Endothelial cell of umbilical vein (primary cell): ENCODE measurements at regions of chr14 and their contacts with region 1.

Region 1: DNA sequence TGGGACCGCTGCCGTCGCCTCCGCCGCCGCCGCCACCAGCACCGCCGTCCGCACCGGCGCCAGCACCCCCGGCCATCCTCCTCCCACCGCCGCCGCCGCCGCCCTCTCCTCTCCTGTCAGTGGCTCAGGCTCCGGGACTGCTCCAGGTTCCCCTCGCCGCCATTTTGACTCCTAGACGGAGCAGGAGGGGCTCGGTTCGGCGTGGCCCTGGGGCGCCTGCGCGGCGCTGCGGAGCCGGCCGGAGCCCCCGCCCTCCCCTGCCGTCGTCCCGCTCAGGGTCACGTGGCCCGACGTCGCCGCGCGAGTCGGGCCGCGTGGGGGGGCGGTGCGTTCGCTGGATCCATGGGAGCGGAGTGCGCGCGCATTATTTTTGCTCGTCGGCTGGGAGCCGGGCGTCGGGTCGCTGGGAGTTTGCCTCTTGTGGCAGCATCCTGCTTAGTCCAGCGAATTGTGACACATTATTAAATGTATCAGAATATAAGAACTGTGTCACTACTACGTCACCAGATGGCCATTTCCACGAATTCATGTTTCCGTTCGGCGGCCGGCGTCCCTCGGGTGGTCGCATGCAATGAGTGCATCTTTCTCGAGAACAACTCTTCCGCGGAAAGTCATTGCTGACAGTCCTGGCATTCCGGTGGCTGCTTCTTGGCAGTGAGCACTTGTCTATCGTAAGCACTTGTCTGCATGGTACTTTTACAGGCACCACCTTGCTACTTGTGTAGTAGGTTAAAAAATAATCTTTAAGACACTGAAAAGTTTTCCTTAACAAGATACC is at the start of gene BTBD7:
- DNase-seq: peak; percentile 97
- H3K4me3 ChIP-seq: peak within 1 kb of the TSS; percentile 82 to 95 (median 94)
- H3K27ac ChIP-seq: peak within 1 kb of the TSS; percentile 82
- H3K4me1 ChIP-seq: peaks cover 26% of the 10 kb centered on the region
- H3K27me3 ChIP-seq: no peaks in the 10 kb centered on the region
- CTCF ChIP-seq: peak in 1 of 2 donors; percentile 19
- POLR2A ChIP-seq: peak; percentile 63
- total RNA-seq, gene BTBD7: 47.8 and 50.2 TPM in 2 replicates

Region 2: GRCh38 chr14:93184388-93185353 is 148.4 kb before region 1 on chr14 and contains the starts of genes LYSET and MOAP1:
- CTCF ChIA-PET with region 1: no interaction called
- POLR2A ChIA-PET with region 1: no interaction called
- dilution Hi-C with region 1: no loop called
- intact Hi-C with region 1: loop called (anchors 1 kb)
- DNase-seq: peak; percentile 88
- H3K4me3 ChIP-seq: peak within 1 kb of the TSS; percentile 58 to 98 (median 96)
- H3K27ac ChIP-seq: peak within 1 kb of the TSS; percentile 98
- H3K4me1 ChIP-seq: peaks cover 21% of the 10 kb centered on the region
- H3K27me3 ChIP-seq: no peaks in the 10 kb centered on the region
- CTCF ChIP-seq: peak in 1 of 2 donors; percentile 27
- POLR2A ChIP-seq: peak; percentile 91
- total RNA-seq, gene LYSET: 18.4 and 18.8 TPM in 2 replicates
- total RNA-seq, gene MOAP1: 15.0 and 16.6 TPM in 2 replicates

Region 3: DNA sequence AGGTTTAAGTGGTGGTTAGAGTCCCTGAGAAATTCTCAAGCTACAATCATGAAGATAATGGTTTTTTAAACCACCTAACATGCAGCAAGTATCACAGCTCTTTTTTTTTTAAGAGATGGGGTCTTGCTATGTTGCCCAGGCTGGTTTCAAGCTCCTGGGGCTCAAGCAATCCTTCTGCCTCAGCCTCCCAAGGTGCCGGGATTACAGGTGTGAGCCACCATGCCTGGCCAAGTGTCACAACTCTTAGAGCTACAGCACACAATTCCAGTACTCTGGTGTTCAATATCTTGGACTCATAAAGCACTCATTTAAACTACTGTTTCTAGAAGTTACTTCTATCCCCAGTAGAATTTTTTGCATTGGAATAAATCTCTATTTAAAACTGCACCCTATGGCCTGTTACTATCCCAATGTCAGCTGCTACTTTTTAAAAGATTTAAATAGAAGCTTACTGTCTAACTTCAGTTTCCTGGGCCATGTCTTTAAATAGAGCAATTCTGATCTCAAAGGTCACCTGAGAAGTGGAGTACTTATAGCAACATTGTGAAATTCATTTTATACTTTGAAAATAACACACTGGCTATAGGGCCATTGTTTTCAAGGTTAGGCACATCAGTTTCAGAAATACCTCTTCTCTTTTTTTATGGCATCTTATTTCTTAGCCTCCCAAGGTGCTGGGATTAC is 137.6 kb before region 1 on chr14:
- CTCF ChIA-PET with region 1: no interaction called
- POLR2A ChIA-PET with region 1: no interaction called
- dilution Hi-C with region 1: no loop called
- intact Hi-C with region 1: no loop called
- DNase-seq: no peak
- H3K4me3 ChIP-seq: no peak overlapping the region
- H3K27ac ChIP-seq: no peak overlapping the region
- H3K4me1 ChIP-seq: no peaks in the 10 kb centered on the region
- H3K27me3 ChIP-seq: no peaks in the 10 kb centered on the region
- CTCF ChIP-seq: no peak
- POLR2A ChIP-seq: no peak

Region 4: GRCh38 chr14:93231129-93231979 is 101.7 kb before region 1 on chr14:
- CTCF ChIA-PET with region 1: interaction called, 4 read pairs
- POLR2A ChIA-PET with region 1: no interaction called
- dilution Hi-C with region 1: no loop called
- intact Hi-C with region 1: loop called (anchors 2 kb)
- DNase-seq: peak; percentile 71
- H3K4me3 ChIP-seq: peak overlapping the region in 2 of 3 experiments; percentile 14 to 37
- H3K27ac ChIP-seq: no peak overlapping the region
- H3K4me1 ChIP-seq: no peaks in the 10 kb centered on the region
- H3K27me3 ChIP-seq: no peaks in the 10 kb centered on the region
- CTCF ChIP-seq: no peak
- POLR2A ChIP-seq: peak; percentile 52

Region 5: GRCh38 chr14:93263416-93263815 is 69.6 kb before region 1 on chr14:
- CTCF ChIA-PET with region 1: no interaction called
- POLR2A ChIA-PET with region 1: no interaction called
- dilution Hi-C with region 1: no loop called
- intact Hi-C with region 1: loop called (anchors 5 kb)
- DNase-seq: no peak
- H3K4me3 ChIP-seq: no peak overlapping the region
- H3K27ac ChIP-seq: no peak overlapping the region
- H3K4me1 ChIP-seq: peaks cover 10% of the 10 kb centered on the region
- H3K27me3 ChIP-seq: no peaks in the 10 kb centered on the region
- CTCF ChIP-seq: no peak
- POLR2A ChIP-seq: no peak

Region 6: GRCh38 chr14:93309427-93309966 is 23.5 kb before region 1 on chr14:
- CTCF ChIA-PET with region 1: no interaction called
- POLR2A ChIA-PET with region 1: no interaction called
- dilution Hi-C with region 1: no loop called
- intact Hi-C with region 1: loop called (anchors 1 kb)
- DNase-seq: peak; percentile 53
- H3K4me3 ChIP-seq: no peak overlapping the region
- H3K27ac ChIP-seq: peak overlapping the region; percentile 38
- H3K4me1 ChIP-seq: peaks cover 29% of the 10 kb centered on the region
- H3K27me3 ChIP-seq: no peaks in the 10 kb centered on the region
- CTCF ChIP-seq: no peak
- POLR2A ChIP-seq: no peak

Region 7: GRCh38 chr14:93317875-93318807 is 14.9 kb before region 1 on chr14:
- CTCF ChIA-PET with region 1: interaction called, 23 read pairs
- POLR2A ChIA-PET with region 1: interaction called, 3 read pairs
- dilution Hi-C with region 1: no loop called
- intact Hi-C with region 1: loop called (anchors 1 kb)
- DNase-seq: peak; percentile 77
- H3K4me3 ChIP-seq: peak overlapping the region in 1 of 3 experiments; percentile 55
- H3K27ac ChIP-seq: peak overlapping the region; percentile 78
- H3K4me1 ChIP-seq: peaks cover 34% of the 10 kb centered on the region
- H3K27me3 ChIP-seq: no peaks in the 10 kb centered on the region
- CTCF ChIP-seq: no peak
- POLR2A ChIP-seq: no peak

Region 8: DNA sequence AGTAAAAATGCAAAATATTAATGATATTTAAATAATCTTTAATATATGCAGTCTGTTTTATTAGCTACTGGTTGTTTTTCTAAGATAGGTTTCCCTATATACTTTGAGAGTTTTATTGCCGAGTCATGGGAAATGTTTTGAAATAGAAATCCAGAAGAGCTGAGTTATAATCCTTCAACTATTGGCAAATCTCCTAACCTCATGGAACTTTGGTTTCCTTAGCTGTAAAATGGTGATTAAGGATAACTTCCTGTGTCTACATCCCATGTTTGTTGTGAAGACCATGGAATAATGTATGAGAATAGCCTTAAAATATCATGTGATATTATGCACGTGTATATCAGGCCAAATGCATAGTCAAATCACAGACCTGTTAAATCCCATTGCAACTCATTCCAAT is 148.7 kb after region 1 on chr14:
- CTCF ChIA-PET with region 1: no interaction called
- POLR2A ChIA-PET with region 1: no interaction called
- dilution Hi-C with region 1: no loop called
- intact Hi-C with region 1: no loop called
- DNase-seq: no peak
- H3K4me3 ChIP-seq: no peak overlapping the region
- H3K27ac ChIP-seq: no peak overlapping the region
- H3K4me1 ChIP-seq: no peaks in the 10 kb centered on the region
- H3K27me3 ChIP-seq: no peaks in the 10 kb centered on the region
- CTCF ChIP-seq: no peak
- POLR2A ChIP-seq: no peak

Region 9: GRCh38 chr14:93533472-93534241 is 200.6 kb after region 1 on chr14:
- CTCF ChIA-PET with region 1: no interaction called
- POLR2A ChIA-PET with region 1: no interaction called
- dilution Hi-C with region 1: no loop called
- intact Hi-C with region 1: no loop called
- DNase-seq: no peak
- H3K4me3 ChIP-seq: no peak overlapping the region
- H3K27ac ChIP-seq: no peak overlapping the region
- H3K4me1 ChIP-seq: no peaks in the 10 kb centered on the region
- H3K27me3 ChIP-seq: no peaks in the 10 kb centered on the region
- CTCF ChIP-seq: no peak
- POLR2A ChIP-seq: no peak